Esophagus muscularis mucosa (tissue), 4 donors: ENCODE measurements at regions of chr12 and their contacts with region 1.

Region 1: GRCh38 chr12:1650260-1650977 is 21.4 kb downstream of the WNT5B start:
- DNase-seq: no peak
- H3K4me3 ChIP-seq: no peak overlapping the region
- H3K27ac ChIP-seq: peak overlapping the region; percentile 62 to 77 (median 70)
- H3K4me1 ChIP-seq: peaks cover 35 to 72% (median 48%) of the 10 kb centered on the region in 4 donors
- H3K27me3 ChIP-seq: no peaks in the 10 kb centered on the region
- CTCF ChIP-seq: no peak
- EP300 ChIP-seq: no peak
- POLR2A ChIP-seq: no peak

Region 2: GRCh38 chr12:1690578-1691122 is 40.2 kb after region 1 on chr12 and contains the start of gene ADIPOR2:
- intact Hi-C with region 1: loop called (anchors 5 kb)
- DNase-seq: peak; percentile 99
- H3K4me3 ChIP-seq: peak within 1 kb of the TSS; percentile 72 to 94 (median 90)
- H3K27ac ChIP-seq: peak within 1 kb of the TSS; percentile 94 to 95 (median 95)
- H3K4me1 ChIP-seq: peaks cover 15 to 42% (median 37%) of the 10 kb centered on the region in 4 donors
- H3K27me3 ChIP-seq: no peaks in the 10 kb centered on the region
- CTCF ChIP-seq: peak in 1 of 3 experiments; percentile 25
- EP300 ChIP-seq: no peak
- POLR2A ChIP-seq: peak; percentile 14
- total RNA-seq, gene ADIPOR2: 28.2 to 37.4 (median 34.1) TPM

Region 3: GRCh38 chr12:1776170-1776948 is 125.9 kb after region 1 on chr12:
- intact Hi-C with region 1: no loop called
- DNase-seq: no peak
- H3K4me3 ChIP-seq: no peak overlapping the region
- H3K27ac ChIP-seq: no peak overlapping the region
- H3K4me1 ChIP-seq: peaks cover 32 to 54% (median 44%) of the 10 kb centered on the region in 4 donors
- H3K27me3 ChIP-seq: no peaks in the 10 kb centered on the region
- CTCF ChIP-seq: no peak
- EP300 ChIP-seq: no peak
- POLR2A ChIP-seq: no peak

Region 4: GRCh38 chr12:1795785-1796514 is 145.5 kb after region 1 on chr12:
- intact Hi-C with region 1: loop called (anchors 1 kb)
- DNase-seq: peak; percentile 97
- H3K4me3 ChIP-seq: peak overlapping the region; percentile 56 to 73 (median 66)
- H3K27ac ChIP-seq: peak overlapping the region; percentile 77 to 87 (median 86)
- H3K4me1 ChIP-seq: peaks cover 37 to 51% (median 46%) of the 10 kb centered on the region in 4 donors
- H3K27me3 ChIP-seq: no peaks in the 10 kb centered on the region
- CTCF ChIP-seq: peak; percentile 98 to 100 (median 99)
- EP300 ChIP-seq: no peak
- POLR2A ChIP-seq: no peak

Region 5: GRCh38 chr12:1939801-1940607 is 289.6 kb after region 1 on chr12:
- intact Hi-C with region 1: loop called (anchors 5 kb)
- DNase-seq: peak; percentile 98
- H3K4me3 ChIP-seq: peak overlapping the region; percentile 5 to 32 (median 18)
- H3K27ac ChIP-seq: peak overlapping the region; percentile 59 to 78 (median 71)
- H3K4me1 ChIP-seq: peaks cover 15 to 56% (median 43%) of the 10 kb centered on the region in 4 donors
- H3K27me3 ChIP-seq: no peaks in the 10 kb centered on the region
- CTCF ChIP-seq: peak; percentile 95 to 99 (median 99)
- EP300 ChIP-seq: no peak
- POLR2A ChIP-seq: no peak